Heart left ventricle (tissue), 16 donors: ENCODE measurements at regions of chr9 and their contacts with region 1.

Region 1: DNA sequence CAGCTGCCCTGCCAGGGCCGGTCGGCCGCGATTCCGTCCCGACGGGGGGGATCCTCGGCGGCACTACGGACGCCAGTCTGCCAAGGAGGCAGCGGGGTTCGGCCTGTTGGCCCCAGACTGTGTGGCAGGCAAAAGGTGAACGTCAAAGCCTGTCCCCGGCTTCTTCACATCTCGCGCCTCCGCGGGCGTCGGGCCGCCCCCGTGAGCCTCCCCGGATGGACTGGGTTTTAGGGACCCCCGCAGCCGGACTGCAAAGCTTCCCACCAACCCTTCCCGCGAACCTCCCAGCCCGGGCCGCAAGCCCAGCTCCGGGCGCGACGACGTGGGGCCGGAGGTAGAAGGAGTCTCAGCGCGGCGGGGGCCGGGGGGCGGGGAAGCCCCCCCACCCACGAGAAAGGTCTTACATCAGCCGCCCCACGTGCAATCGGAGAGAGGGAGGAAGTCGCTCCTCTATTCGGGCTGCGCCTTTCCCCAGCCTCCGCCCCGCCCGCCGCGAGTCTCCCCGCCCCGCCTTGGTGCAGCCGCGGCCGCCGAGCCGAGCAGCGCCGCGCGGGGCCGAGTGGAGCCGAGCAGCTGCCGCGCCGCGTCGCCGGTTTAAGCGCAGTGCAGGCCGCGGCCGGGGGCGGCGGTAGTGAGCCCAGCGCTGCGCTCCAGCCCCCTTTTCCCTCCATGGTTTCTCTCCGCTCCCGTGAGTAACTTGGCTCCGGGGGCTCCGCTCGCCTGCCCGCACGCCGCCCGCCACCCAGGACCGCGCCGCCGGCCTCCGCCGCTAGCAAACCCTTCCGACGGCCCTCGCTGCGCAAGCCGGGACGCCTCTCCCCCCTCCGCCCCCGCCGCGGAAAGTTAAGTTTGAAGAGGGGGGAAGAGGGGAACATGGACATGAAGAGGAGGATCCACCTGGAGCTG is at the start of gene ANP32B:
- DNase-seq: peak; percentile 92 to 96 (median 93)
- ATAC-seq: peak; percentile 75 to 94 (median 92)
- H3K4me3 ChIP-seq: peak within 1 kb of the TSS; percentile 70 to 99 (median 96)
- H3K27ac ChIP-seq: peak within 1 kb of the TSS; percentile 96 to 99 (median 98)
- H3K4me1 ChIP-seq: peaks cover 0 to 54% (median 44%) of the 10 kb centered on the region in 12 donors
- H3K27me3 ChIP-seq: no peaks in the 10 kb centered on the region
- CTCF ChIP-seq: peak; percentile 66 to 99 (median 90)
- POLR2A ChIP-seq: peak in 1 of 2 donors; percentile 27
- total RNA-seq, gene ANP32B: 16.3 to 78.3 (median 45.7) TPM

Region 2: DNA sequence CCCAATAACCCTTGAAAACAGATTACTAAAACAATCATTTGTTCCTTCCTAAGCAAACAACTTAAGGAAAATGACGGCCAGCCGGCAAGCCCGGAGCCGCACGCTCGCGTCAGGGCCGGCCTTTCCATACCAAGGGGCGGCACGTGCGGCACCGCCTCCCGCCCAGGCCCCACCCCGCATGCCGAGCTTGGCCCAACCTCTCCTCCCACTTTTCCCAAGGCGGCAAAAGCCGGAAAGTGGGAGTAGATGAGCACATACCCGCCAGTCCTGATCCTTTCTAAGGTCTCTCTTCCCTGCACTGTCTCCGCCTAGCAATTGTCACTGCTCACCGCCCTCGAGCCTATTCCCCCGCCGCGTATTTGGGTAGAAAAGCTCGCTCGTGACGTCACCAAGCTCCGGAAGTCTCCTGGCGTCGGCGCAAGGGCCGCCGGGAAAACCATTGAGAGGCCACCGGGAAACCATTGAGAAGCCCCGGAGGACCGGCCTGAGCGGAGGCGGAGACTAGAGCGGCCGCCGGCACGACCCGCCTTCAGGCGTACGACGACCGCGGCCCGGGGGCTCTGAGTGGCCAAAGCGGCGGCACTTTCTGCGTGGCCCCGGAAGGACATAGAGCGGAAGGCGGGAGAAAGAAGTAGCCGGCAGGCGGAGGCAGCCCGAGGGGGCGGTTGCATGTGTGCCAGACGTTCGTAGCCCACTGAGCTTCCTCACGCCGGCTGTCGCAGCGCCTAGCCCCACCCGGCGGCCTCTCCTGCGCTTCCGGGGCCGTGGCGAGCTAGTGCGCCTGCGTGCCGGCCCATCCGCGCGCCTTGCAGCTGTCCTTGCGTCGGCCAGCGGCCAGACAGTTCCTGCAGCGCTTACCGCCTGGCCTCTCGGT is 349.7 kb before region 1 on chr9 and contains the starts of genes NCBP1 and TSTD2:
- intact Hi-C with region 1: loop called in 2 of 10 experiments (anchors 5 to 10 kb)
- DNase-seq: peak; percentile 97 to 99 (median 98)
- ATAC-seq: peak; percentile 93 to 96 (median 94)
- H3K4me3 ChIP-seq: peak within 1 kb of the TSS; percentile 50 to 98 (median 76)
- H3K27ac ChIP-seq: peak within 1 kb of the TSS; percentile 86 to 98 (median 96)
- H3K4me1 ChIP-seq: peaks cover 6 to 66% (median 48%) of the 10 kb centered on the region in 12 donors
- H3K27me3 ChIP-seq: no peaks in the 10 kb centered on the region
- CTCF ChIP-seq: peak in 4 of 12 donors; percentile 7 to 29 (median 22)
- POLR2A ChIP-seq: peak in 1 of 2 donors; percentile 60
- total RNA-seq, gene NCBP1: 13.9 to 22.4 (median 19.7) TPM
- total RNA-seq, gene TSTD2: 16.5 to 32.9 (median 22.4) TPM

Region 3: GRCh38 chr9:97703437-97704344 is 279.2 kb before region 1 on chr9:
- intact Hi-C with region 1: no loop called
- DNase-seq: no peak
- ATAC-seq: peak in 2 of 4 donors; percentile 39 to 60
- H3K4me3 ChIP-seq: no peak overlapping the region
- H3K27ac ChIP-seq: no peak overlapping the region
- H3K4me1 ChIP-seq: peaks cover 0 to 7% (median 0%) of the 10 kb centered on the region in 12 donors
- H3K27me3 ChIP-seq: peaks cover 0 to 21% (median 0%) of the 10 kb centered on the region in 9 donors
- CTCF ChIP-seq: no peak
- POLR2A ChIP-seq: no peak

Region 4: DNA sequence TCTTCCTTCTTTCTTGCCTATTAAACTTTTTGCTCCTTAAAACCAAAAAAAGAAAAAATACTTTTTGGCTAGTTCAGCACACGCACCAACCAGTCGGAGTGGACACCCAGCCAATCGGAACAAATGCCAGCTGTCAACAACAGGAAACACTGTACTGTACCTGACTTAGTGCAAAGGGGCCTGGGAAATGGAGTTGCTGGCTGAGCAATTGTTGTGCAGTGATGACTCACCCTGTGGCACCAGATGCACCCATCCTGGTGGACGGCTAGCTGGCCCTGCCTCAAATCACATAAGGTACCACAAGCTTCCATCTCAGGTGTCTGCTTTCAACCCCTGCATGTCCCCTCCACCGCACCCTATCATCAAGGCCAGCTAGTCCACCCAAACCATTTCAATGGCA is 109.1 kb before region 1 on chr9:
- intact Hi-C with region 1: no loop called
- DNase-seq: no peak
- ATAC-seq: no peak
- H3K4me3 ChIP-seq: no peak overlapping the region
- H3K27ac ChIP-seq: no peak overlapping the region
- H3K4me1 ChIP-seq: peaks cover 0 to 14% (median 8%) of the 10 kb centered on the region in 12 donors
- H3K27me3 ChIP-seq: peaks cover 0 to 4% (median 0%) of the 10 kb centered on the region in 9 donors
- CTCF ChIP-seq: no peak
- POLR2A ChIP-seq: no peak

Region 5: GRCh38 chr9:97900738-97901565 is 82.0 kb before region 1 on chr9:
- intact Hi-C with region 1: no loop called
- DNase-seq: no peak
- ATAC-seq: peak in 1 of 4 donors; percentile 50
- H3K4me3 ChIP-seq: no peak overlapping the region
- H3K27ac ChIP-seq: no peak overlapping the region
- H3K4me1 ChIP-seq: peaks cover 0 to 14% (median under 1%) of the 10 kb centered on the region in 12 donors
- H3K27me3 ChIP-seq: no peaks in the 10 kb centered on the region
- CTCF ChIP-seq: peak; percentile 53 to 77 (median 70)
- POLR2A ChIP-seq: no peak

Region 6: DNA sequence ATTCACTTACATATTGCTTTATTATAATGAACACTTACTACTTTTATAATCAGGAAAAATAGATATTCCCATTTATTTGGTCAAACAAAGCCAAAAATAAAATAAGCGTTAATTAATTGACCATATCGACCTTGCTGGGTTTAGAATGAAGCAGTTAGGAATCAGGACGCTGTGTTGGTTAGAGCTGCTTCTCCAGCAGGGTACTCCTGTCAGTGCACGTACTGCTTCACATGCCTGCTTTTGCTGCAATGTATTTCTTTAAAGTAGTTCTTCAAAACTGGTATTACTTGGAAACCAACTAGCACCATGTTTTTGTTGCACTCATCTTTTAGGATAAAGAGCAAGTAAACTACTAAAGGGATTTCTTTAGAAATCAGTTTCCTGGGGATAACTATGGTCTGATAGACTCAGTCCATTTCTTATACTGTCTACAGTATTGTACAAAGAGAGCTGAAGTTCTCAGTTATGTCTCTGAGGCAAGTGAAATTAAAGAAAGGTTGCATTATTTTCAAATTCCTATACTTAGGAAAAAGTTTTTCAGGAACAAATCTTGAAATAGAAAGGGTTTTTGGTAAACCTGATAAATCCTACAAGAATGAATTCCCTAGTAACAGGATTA is 53.8 kb before region 1 on chr9:
- intact Hi-C with region 1: loop called in 5 of 10 experiments (anchors 5 to 10 kb)
- DNase-seq: no peak
- ATAC-seq: no peak
- H3K4me3 ChIP-seq: no peak overlapping the region
- H3K27ac ChIP-seq: no peak overlapping the region
- H3K4me1 ChIP-seq: peaks cover 0 to 2% (median 0%) of the 10 kb centered on the region in 12 donors
- H3K27me3 ChIP-seq: peaks cover 0 to 74% (median 3%) of the 10 kb centered on the region in 9 donors
- CTCF ChIP-seq: no peak
- POLR2A ChIP-seq: no peak

Region 7: DNA sequence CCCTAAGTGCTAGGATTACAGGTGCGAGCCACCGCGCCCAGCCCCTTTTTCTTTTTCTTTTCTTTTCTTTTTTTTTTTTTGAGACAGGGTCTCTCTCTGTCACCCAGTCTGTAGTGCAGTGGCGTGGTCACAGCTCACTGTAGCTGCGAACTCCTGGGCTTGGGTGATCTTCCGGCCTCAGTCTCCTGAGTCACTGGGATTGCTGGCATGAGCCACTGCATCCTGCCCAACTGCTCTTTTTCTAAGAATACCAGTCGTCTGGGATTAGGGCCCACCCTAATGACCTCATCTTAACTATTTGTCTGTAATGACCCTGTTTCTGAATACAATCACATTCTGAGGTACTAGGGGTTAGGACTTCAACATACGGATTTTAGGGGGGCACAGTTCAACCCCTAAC is 39.5 kb after region 1 on chr9:
- intact Hi-C with region 1: loop called in 3 of 10 experiments (anchors 2 to 5 kb)
- DNase-seq: no peak
- ATAC-seq: no peak
- H3K4me3 ChIP-seq: no peak overlapping the region
- H3K27ac ChIP-seq: peak overlapping the region in 9 of 12 donors; percentile 41 to 85 (median 74)
- H3K4me1 ChIP-seq: peaks cover 0 to 50% (median 5%) of the 10 kb centered on the region in 12 donors
- H3K27me3 ChIP-seq: no peaks in the 10 kb centered on the region
- CTCF ChIP-seq: no peak
- POLR2A ChIP-seq: no peak

Region 8: GRCh38 chr9:98056269-98057137 is 73.6 kb after region 1 on chr9 and contains the start of gene NANS:
- intact Hi-C with region 1: loop called in 4 of 10 experiments (anchors 5 kb)
- DNase-seq: peak; percentile 94 to 96 (median 95)
- ATAC-seq: peak; percentile 97 to 99 (median 99)
- H3K4me3 ChIP-seq: peak within 1 kb of the TSS; percentile 64 to 98 (median 80)
- H3K27ac ChIP-seq: peak within 1 kb of the TSS; percentile 79 to 97 (median 90)
- H3K4me1 ChIP-seq: peaks cover 0 to 32% (median 10%) of the 10 kb centered on the region in 12 donors
- H3K27me3 ChIP-seq: no peaks in the 10 kb centered on the region
- CTCF ChIP-seq: peak in 1 of 12 donors; percentile 9
- POLR2A ChIP-seq: peak; percentile 97 to 98
- total RNA-seq, gene NANS: 24.3 to 59.0 (median 33.7) TPM

Region 9: GRCh38 chr9:98081477-98082219 is 98.7 kb after region 1 on chr9:
- intact Hi-C with region 1: no loop called
- DNase-seq: peak in 1 of 5 donors; percentile 32
- ATAC-seq: peak in 2 of 4 donors; percentile 31 to 55
- H3K4me3 ChIP-seq: no peak overlapping the region
- H3K27ac ChIP-seq: no peak overlapping the region
- H3K4me1 ChIP-seq: peaks cover 0 to 24% (median 0%) of the 10 kb centered on the region in 12 donors
- H3K27me3 ChIP-seq: no peaks in the 10 kb centered on the region
- CTCF ChIP-seq: no peak
- POLR2A ChIP-seq: no peak